Transverse colon (tissue), 4 donors: ENCODE measurements at regions of chrX and their contacts with region 1.

Region 1: GRCh38 chrX:147602176-147602696 is 309.5 kb upstream of the FMR1 start:
- DNase-seq: no peak
- H3K4me3 ChIP-seq: no peak overlapping the region
- H3K27ac ChIP-seq: no peak overlapping the region
- H3K4me1 ChIP-seq: no peaks in the 10 kb centered on the region
- H3K27me3 ChIP-seq: no peaks in the 10 kb centered on the region
- CTCF ChIP-seq: no peak
- EP300 ChIP-seq: no peak
- POLR2A ChIP-seq: no peak

Region 2: GRCh38 chrX:147679356-147680005 is 77.2 kb after region 1 on chrX:
- in situ Hi-C with region 1: loop called in 1 of 4 experiments (anchors 25 kb)
- intact Hi-C with region 1: no loop called
- DNase-seq: no peak
- H3K4me3 ChIP-seq: no peak overlapping the region
- H3K27ac ChIP-seq: no peak overlapping the region
- H3K4me1 ChIP-seq: no peaks in the 10 kb centered on the region
- H3K27me3 ChIP-seq: no peaks in the 10 kb centered on the region
- CTCF ChIP-seq: no peak
- EP300 ChIP-seq: no peak
- POLR2A ChIP-seq: no peak

Region 3: GRCh38 chrX:147757750-147758149 is 155.5 kb after region 1 on chrX:
- in situ Hi-C with region 1: no loop called
- intact Hi-C with region 1: no loop called
- DNase-seq: no peak
- H3K4me3 ChIP-seq: no peak overlapping the region
- H3K27ac ChIP-seq: no peak overlapping the region
- H3K4me1 ChIP-seq: no peaks in the 10 kb centered on the region
- H3K27me3 ChIP-seq: no peaks in the 10 kb centered on the region
- CTCF ChIP-seq: no peak
- EP300 ChIP-seq: no peak
- POLR2A ChIP-seq: no peak